Activated naive CD4-positive, alpha-beta T cell treated with anti-CD3 and anti-CD28 coated beads for 36 hours (primary cell): ENCODE measurements at regions of chr9 and their contacts with region 1.

Region 1: GRCh38 chr9:32378993-32379729 is 5.3 kb upstream of the ACO1 start:
- DNase-seq: peak; percentile 67
- H3K4me3 Mint-ChIP-seq: no peak overlapping the region
- H3K27ac Mint-ChIP-seq: no peak overlapping the region
- H3K4me1 Mint-ChIP-seq: peaks cover 15% of the 10 kb centered on the region
- H3K27me3 Mint-ChIP-seq: peaks cover 3% of the 10 kb centered on the region

Region 2: GRCh38 chr9:32322622-32323021 is 56.5 kb before region 1 on chr9:
- CTCF ChIA-PET with region 1: no interaction called
- intact Hi-C with region 1: no loop called
- DNase-seq: no peak
- H3K4me3 Mint-ChIP-seq: no peak overlapping the region
- H3K27ac Mint-ChIP-seq: no peak overlapping the region
- H3K4me1 Mint-ChIP-seq: no peaks in the 10 kb centered on the region
- H3K27me3 Mint-ChIP-seq: peaks cover 11% of the 10 kb centered on the region

Region 3: GRCh38 chr9:32431940-32432555 is 52.9 kb after region 1 on chr9:
- CTCF ChIA-PET with region 1: interaction called, 45 read pairs
- intact Hi-C with region 1: loop called (anchors 1 kb)
- DNase-seq: peak; percentile 38
- H3K4me3 Mint-ChIP-seq: no peak overlapping the region
- H3K27ac Mint-ChIP-seq: no peak overlapping the region
- H3K4me1 Mint-ChIP-seq: peaks cover 3% of the 10 kb centered on the region
- H3K27me3 Mint-ChIP-seq: no peaks in the 10 kb centered on the region

Region 4: GRCh38 chr9:32526041-32526706 is 147.0 kb after region 1 on chr9 and contains the start of gene RIGI:
- CTCF ChIA-PET with region 1: interaction called, 33 read pairs
- intact Hi-C with region 1: loop called (anchors 1 kb)
- DNase-seq: peak; percentile 90
- H3K4me3 Mint-ChIP-seq: peak within 1 kb of the TSS; percentile 77
- H3K27ac Mint-ChIP-seq: peak within 1 kb of the TSS; percentile 84
- H3K4me1 Mint-ChIP-seq: peaks cover 32% of the 10 kb centered on the region
- H3K27me3 Mint-ChIP-seq: no peaks in the 10 kb centered on the region
- total RNA-seq, gene RIGI: 7.5 to 8.4 TPM

Region 5: GRCh38 chr9:32558408-32558934 is 179.3 kb after region 1 on chr9:
- CTCF ChIA-PET with region 1: interaction called, 12 read pairs
- intact Hi-C with region 1: no loop called
- DNase-seq: no peak
- H3K4me3 Mint-ChIP-seq: no peak overlapping the region
- H3K27ac Mint-ChIP-seq: peak overlapping the region; percentile 17
- H3K4me1 Mint-ChIP-seq: peaks cover 36% of the 10 kb centered on the region
- H3K27me3 Mint-ChIP-seq: no peaks in the 10 kb centered on the region

Region 6: DNA sequence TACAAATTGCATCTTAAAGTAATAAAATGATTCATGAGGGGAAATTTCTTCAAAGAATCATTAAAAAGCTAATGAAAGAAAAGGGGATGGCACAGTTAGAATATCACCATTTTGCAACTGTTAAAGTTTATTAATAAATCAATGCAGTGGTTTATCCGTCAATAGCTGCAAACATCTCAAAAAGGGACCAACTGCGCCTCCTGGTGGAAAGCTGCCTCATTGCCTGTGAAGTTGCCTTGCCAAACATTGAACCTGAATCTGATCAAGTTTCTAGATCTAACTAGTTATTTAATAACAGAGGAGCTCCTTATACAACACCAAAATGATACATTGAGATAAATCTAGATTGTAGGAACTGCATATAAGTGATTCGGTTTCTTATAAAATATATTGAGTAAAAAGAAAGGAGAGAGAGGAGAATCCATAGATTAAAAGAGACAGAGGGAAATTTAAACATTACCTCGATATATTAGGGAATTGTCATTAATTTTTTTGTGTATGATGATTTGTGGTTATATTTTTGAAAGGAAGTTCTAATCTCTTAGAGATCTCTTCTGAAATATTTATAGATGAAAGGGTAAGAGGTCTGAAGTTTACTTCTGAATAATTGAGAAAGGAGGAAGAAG is 200.7 kb after region 1 on chr9:
- CTCF ChIA-PET with region 1: interaction called, 322 read pairs
- intact Hi-C with region 1: loop called (anchors 1 kb)
- DNase-seq: peak; percentile 89
- H3K4me3 Mint-ChIP-seq: no peak overlapping the region
- H3K27ac Mint-ChIP-seq: no peak overlapping the region
- H3K4me1 Mint-ChIP-seq: no peaks in the 10 kb centered on the region
- H3K27me3 Mint-ChIP-seq: peaks cover 13% of the 10 kb centered on the region

Region 7: GRCh38 chr9:32703635-32704034 is 324.5 kb after region 1 on chr9:
- CTCF ChIA-PET with region 1: no interaction called
- intact Hi-C with region 1: loop called (anchors 10 kb)
- DNase-seq: no peak
- H3K4me3 Mint-ChIP-seq: no peak overlapping the region
- H3K27ac Mint-ChIP-seq: no peak overlapping the region
- H3K4me1 Mint-ChIP-seq: no peaks in the 10 kb centered on the region
- H3K27me3 Mint-ChIP-seq: no peaks in the 10 kb centered on the region

Region 8: DNA sequence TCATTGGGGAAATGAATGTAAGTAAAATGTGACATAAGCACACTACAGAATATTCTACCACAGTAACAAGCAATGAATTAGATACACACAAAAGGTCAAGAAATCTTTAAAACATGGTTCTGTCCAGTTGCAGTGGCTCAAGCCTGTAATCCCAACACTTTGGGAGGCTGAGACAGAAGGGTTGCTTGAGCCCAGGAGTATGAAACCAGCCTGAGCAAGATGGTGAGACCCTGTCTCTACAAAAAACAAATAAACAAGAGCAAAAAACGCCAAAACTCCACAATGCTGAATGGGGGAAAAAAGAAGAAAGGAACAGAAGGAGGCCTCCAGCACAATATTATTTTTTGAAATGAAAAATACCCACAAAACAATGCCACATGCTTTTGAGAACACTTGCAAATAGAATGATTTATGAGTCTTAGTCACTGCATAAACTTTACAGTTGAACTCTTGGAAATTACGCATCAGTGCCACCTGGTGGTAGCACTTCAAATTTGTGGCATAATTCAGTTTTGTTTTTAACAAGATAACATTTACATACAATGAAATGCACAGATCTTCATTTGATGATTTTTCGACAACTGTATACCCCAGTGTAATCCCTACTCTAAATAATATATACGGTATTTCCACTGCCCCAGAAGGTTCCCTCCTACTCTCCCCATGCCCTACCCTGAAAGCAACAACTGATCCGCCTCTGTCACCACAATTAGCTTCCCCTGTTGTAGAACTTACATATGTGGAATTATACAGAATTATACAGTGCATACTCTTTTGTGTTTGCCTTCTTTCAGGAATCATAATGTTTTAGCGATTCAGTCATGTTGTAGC is 846.4 kb after region 1 on chr9:
- CTCF ChIA-PET with region 1: no interaction called
- intact Hi-C with region 1: loop called (anchors 2 kb)
- DNase-seq: peak; percentile 89
- H3K4me3 Mint-ChIP-seq: no peak overlapping the region
- H3K27ac Mint-ChIP-seq: peak overlapping the region; percentile 4
- H3K4me1 Mint-ChIP-seq: peaks cover 15% of the 10 kb centered on the region
- H3K27me3 Mint-ChIP-seq: no peaks in the 10 kb centered on the region